ENCODE measurements at regions of chr12 and their contacts with region 1.

Region 1: DNA sequence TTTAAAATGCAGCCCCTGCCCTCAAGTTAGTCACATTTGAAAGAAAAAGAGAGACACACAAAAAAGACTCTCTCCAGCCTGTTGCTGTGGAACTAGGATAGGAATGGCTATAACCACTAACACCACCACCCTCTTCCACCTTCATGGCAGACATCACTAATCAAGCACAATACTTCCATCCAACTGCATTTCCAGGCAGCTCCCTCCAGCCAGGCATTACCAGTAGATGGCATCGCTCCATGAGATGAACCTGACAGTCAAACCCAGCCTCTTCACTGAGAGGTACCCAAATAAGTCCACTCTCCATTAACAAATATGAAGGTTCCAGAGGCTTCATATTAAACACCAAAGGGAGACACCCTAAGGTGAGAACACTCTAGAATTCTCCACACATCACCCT is 24.4 kb downstream of the SLC8B1 start:
- DNase-seq: no peak
- ATAC-seq: peak in 3 of 4 donors; percentile 14 to 23 (median 21)
- H3K4me3 ChIP-seq: no peak overlapping the region
- H3K27ac ChIP-seq: no peak overlapping the region
- H3K4me1 ChIP-seq: no peaks in the 10 kb centered on the region
- H3K27me3 ChIP-seq: no peaks in the 10 kb centered on the region
- CTCF ChIP-seq: peak in 1 of 4 donors; percentile 30
- POLR2A ChIP-seq: no peak

Region 2: DNA sequence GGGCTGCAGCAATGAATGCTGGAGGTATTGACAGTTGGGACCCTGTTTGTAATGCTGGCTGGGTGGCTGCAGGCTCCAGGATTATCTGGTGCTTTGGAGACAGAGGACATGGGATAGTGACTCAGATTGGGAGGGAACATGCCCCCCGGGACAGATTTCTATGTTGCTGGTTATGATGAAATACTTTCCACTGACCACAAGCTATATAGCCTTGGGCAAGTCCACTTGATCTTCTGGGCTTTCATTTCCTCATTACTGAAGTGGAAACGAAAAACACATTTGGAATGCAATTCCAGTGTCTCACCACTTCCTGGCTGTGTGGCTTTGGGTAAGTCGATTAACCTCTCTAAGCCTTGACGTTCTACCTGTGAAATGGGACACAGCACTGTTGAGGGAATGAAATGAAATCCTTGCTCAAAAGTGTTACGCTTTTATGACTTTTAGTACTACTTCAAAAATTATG is 95.5 kb before region 1 on chr12:
- intact Hi-C with region 1: no loop called
- DNase-seq: no peak
- ATAC-seq: peak; percentile 56 to 89 (median 70)
- H3K4me3 ChIP-seq: no peak overlapping the region
- H3K27ac ChIP-seq: no peak overlapping the region
- H3K4me1 ChIP-seq: no peaks in the 10 kb centered on the region
- H3K27me3 ChIP-seq: no peaks in the 10 kb centered on the region
- CTCF ChIP-seq: peak in 1 of 4 donors; percentile 20
- POLR2A ChIP-seq: no peak

Region 3: GRCh38 chr12:113232840-113233585 is 77.5 kb before region 1 on chr12:
- intact Hi-C with region 1: no loop called
- DNase-seq: peak in 2 of 3 donors; percentile 45 to 46
- ATAC-seq: peak; percentile 19 to 34 (median 24)
- H3K4me3 ChIP-seq: no peak overlapping the region
- H3K27ac ChIP-seq: peak overlapping the region in 2 of 3 donors; percentile 27 to 29
- H3K4me1 ChIP-seq: peaks cover 0 to 53% (median 10%) of the 10 kb centered on the region in 4 donors
- H3K27me3 ChIP-seq: no peaks in the 10 kb centered on the region
- CTCF ChIP-seq: no peak
- POLR2A ChIP-seq: no peak

Region 4: DNA sequence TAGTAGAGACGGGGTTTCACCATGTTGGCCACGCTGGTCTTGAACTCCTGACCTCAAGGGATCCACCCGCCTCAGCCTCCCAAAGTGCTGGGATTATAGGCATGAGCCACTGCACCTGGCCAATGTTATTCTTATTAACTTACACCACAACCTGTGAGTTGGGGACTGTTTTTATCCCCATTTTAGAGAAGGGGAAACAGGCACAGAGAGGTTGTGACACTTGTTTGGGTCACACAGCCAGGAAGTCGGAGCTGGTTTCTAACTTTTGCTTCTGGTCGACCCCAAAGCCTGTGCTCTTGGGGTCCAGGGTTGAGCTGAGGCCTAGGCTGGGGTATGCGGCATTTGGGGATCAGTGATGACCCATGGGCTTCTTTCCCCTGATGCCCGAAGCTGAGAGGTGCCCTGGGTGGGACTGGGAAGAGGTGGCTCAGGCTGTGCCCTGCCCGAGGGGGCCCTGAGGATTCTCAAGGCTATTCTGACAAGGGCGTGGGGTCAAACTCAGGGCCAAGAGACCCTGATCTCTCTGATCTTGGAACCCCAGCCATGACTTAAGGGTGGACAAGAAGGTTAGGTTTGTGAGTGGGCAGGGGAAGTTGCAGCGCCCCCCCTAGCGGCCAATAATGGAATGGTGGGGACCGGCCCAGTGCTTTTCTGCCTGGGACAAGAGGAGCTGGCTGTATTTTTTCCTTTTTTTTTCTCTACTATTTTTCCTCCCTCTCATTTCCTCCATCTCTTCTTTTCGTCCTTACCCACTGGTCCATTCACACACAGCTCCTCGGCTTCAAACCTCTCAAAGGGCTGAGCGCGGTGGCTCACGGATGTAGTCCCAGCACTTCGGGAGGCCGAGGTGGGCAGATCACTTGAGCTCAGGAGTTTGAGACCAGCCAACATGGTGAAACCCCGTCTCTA is 114.7 kb after region 1 on chr12:
- intact Hi-C with region 1: loop called (anchors 5 to 10 kb)
- DNase-seq: peak in 1 of 3 donors; percentile 66
- ATAC-seq: peak; percentile 28 to 52 (median 39)
- H3K4me3 ChIP-seq: no peak overlapping the region
- H3K27ac ChIP-seq: no peak overlapping the region
- H3K4me1 ChIP-seq: peaks cover 0 to 27% (median 8%) of the 10 kb centered on the region in 4 donors
- H3K27me3 ChIP-seq: no peaks in the 10 kb centered on the region
- CTCF ChIP-seq: peak; percentile 66 to 96 (median 90)
- POLR2A ChIP-seq: no peak

Region 5: GRCh38 chr12:113439606-113440030 is 129.1 kb after region 1 on chr12:
- intact Hi-C with region 1: loop called in 1 of 2 experiments (anchors 10 kb)
- DNase-seq: no peak
- ATAC-seq: peak; percentile 54 to 69 (median 62)
- H3K4me3 ChIP-seq: no peak overlapping the region
- H3K27ac ChIP-seq: no peak overlapping the region
- H3K4me1 ChIP-seq: no peaks in the 10 kb centered on the region
- H3K27me3 ChIP-seq: no peaks in the 10 kb centered on the region
- CTCF ChIP-seq: peak; percentile 37 to 56 (median 55)
- POLR2A ChIP-seq: no peak

Region 6: GRCh38 chr12:113456761-113457160 is 146.3 kb after region 1 on chr12:
- intact Hi-C with region 1: no loop called
- DNase-seq: no peak
- ATAC-seq: no peak
- H3K4me3 ChIP-seq: no peak overlapping the region
- H3K27ac ChIP-seq: no peak overlapping the region
- H3K4me1 ChIP-seq: no peaks in the 10 kb centered on the region
- H3K27me3 ChIP-seq: peaks cover 0 to 2% of the 10 kb centered on the region in 2 donors
- CTCF ChIP-seq: no peak
- POLR2A ChIP-seq: no peak

Measured in right lobe of liver (tissue), 6 donors.